CD8-positive, alpha-beta memory T cell (primary cell): ENCODE measurements at regions of chr22 and their contacts with region 1.

Region 1: GRCh38 chr22:41022470-41023298 is 69.7 kb upstream of the EP300 start:
- DNase-seq: peak; percentile 62 to 85 (median 74)
- H3K4me3 ChIP-seq: peak overlapping the region; percentile 64
- H3K4me3 Mint-ChIP-seq: peak overlapping the region; percentile 81 to 91 (median 83)
- H3K27ac ChIP-seq: peak overlapping the region; percentile 59
- H3K27ac Mint-ChIP-seq: peak overlapping the region; percentile 69 to 92 (median 86)
- H3K4me1 ChIP-seq: peaks cover 13% of the 10 kb centered on the region
- H3K4me1 Mint-ChIP-seq: peaks cover 10 to 22% (median 21%) of the 10 kb centered on the region in 3 donors
- H3K27me3 ChIP-seq: no peaks in the 10 kb centered on the region
- H3K27me3 Mint-ChIP-seq: no peaks in the 10 kb centered on the region

Region 2: GRCh38 chr22:40950962-40951794 is 71.5 kb before region 1 on chr22 and contains the start of gene RBX1:
- CTCF ChIA-PET with region 1: interaction called, 5 read pairs
- POLR2A ChIA-PET with region 1: interaction called, 34 read pairs
- DNase-seq: peak; percentile 98 to 100 (median 99)
- H3K4me3 ChIP-seq: peak within 1 kb of the TSS; percentile 81
- H3K4me3 Mint-ChIP-seq: peak within 1 kb of the TSS; percentile 92 to 100 (median 98)
- H3K27ac ChIP-seq: peak within 1 kb of the TSS; percentile 98
- H3K27ac Mint-ChIP-seq: peak within 1 kb of the TSS; percentile 93 to 100 (median 99)
- H3K4me1 ChIP-seq: peaks cover 20% of the 10 kb centered on the region
- H3K4me1 Mint-ChIP-seq: peaks cover 31 to 48% (median 46%) of the 10 kb centered on the region in 3 donors
- H3K27me3 ChIP-seq: no peaks in the 10 kb centered on the region
- H3K27me3 Mint-ChIP-seq: peaks cover 0 to 6% of the 10 kb centered on the region in 2 donors
- total RNA-seq, gene RBX1: 88.3 to 88.8 TPM

Region 3: GRCh38 chr22:41048791-41049717 is 26.4 kb after region 1 on chr22:
- CTCF ChIA-PET with region 1: no interaction called
- POLR2A ChIA-PET with region 1: no interaction called
- DNase-seq: no peak
- H3K4me3 ChIP-seq: no peak overlapping the region
- H3K4me3 Mint-ChIP-seq: no peak overlapping the region
- H3K27ac ChIP-seq: no peak overlapping the region
- H3K27ac Mint-ChIP-seq: no peak overlapping the region
- H3K4me1 ChIP-seq: no peaks in the 10 kb centered on the region
- H3K4me1 Mint-ChIP-seq: no peaks in the 10 kb centered on the region
- H3K27me3 ChIP-seq: no peaks in the 10 kb centered on the region
- H3K27me3 Mint-ChIP-seq: peaks cover 0 to 2% of the 10 kb centered on the region in 2 donors